ENCODE measurements at regions of chrX and their contacts with region 1.

Region 1: DNA sequence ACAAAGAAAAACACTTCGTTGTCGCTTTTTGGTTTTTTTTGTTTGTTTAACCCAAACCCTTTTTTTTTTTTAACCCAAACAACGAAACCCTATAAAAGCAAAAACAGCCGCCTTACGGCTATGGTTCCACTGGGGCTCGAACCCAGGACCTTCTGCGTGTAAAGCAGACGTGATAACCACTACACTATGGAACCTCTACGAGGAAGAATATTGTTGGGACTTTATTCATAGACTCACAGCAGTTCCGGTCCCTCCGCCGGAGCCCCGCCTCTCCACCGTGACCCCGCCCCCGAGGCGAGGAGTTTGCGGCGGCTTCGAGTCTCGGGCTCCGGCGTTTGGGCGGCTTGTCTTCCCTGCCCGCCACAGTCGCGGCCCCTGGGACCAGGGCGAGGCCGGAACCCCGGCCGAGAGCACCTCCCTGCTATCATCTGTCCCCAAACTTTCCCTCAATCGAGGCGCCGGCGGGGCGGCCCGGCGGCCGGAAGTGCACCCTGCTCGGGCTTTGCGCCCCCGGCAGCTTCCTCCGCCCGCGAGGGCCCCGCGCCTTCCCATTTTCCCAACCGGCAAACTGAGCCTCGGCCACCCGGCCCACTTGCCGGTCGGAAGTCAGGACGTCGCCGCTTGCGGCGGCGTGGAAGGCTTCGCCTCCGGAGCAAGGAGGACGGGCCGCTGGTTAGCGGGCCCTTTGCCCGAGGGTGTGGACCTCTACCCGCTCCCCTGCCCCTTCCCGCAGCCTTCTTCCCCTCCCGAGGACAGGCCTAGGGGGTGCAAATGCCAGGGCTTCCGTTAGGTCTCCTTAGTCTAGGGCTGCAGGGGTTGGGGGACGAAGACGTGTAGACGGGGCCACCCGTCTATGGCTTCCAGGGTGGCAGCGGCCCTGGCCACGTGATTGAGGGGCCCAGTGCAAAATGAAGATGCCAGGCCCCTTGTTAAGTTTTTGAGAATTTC is 3.2 kb upstream of the RS1 start:
- DNase-seq: peak; percentile 75
- H3K4me3 Mint-ChIP-seq: peak overlapping the region; percentile 74
- H3K27ac Mint-ChIP-seq: peak overlapping the region; percentile 52
- H3K4me1 Mint-ChIP-seq: no peaks in the 10 kb centered on the region
- H3K27me3 Mint-ChIP-seq: no peaks in the 10 kb centered on the region

Region 2: GRCh38 chrX:18574591-18574990 is 100.5 kb before region 1 on chrX:
- intact Hi-C with region 1: no loop called
- DNase-seq: no peak
- H3K4me3 Mint-ChIP-seq: no peak overlapping the region
- H3K27ac Mint-ChIP-seq: no peak overlapping the region
- H3K4me1 Mint-ChIP-seq: no peaks in the 10 kb centered on the region
- H3K27me3 Mint-ChIP-seq: no peaks in the 10 kb centered on the region

Region 3: GRCh38 chrX:18886344-18887161 is 211.5 kb after region 1 on chrX:
- intact Hi-C with region 1: loop called (anchors 1 kb)
- DNase-seq: peak; percentile 12
- H3K4me3 Mint-ChIP-seq: peak overlapping the region; percentile 85
- H3K27ac Mint-ChIP-seq: peak overlapping the region; percentile 85
- H3K4me1 Mint-ChIP-seq: peaks cover 19% of the 10 kb centered on the region
- H3K27me3 Mint-ChIP-seq: peaks cover 2% of the 10 kb centered on the region

Region 4: DNA sequence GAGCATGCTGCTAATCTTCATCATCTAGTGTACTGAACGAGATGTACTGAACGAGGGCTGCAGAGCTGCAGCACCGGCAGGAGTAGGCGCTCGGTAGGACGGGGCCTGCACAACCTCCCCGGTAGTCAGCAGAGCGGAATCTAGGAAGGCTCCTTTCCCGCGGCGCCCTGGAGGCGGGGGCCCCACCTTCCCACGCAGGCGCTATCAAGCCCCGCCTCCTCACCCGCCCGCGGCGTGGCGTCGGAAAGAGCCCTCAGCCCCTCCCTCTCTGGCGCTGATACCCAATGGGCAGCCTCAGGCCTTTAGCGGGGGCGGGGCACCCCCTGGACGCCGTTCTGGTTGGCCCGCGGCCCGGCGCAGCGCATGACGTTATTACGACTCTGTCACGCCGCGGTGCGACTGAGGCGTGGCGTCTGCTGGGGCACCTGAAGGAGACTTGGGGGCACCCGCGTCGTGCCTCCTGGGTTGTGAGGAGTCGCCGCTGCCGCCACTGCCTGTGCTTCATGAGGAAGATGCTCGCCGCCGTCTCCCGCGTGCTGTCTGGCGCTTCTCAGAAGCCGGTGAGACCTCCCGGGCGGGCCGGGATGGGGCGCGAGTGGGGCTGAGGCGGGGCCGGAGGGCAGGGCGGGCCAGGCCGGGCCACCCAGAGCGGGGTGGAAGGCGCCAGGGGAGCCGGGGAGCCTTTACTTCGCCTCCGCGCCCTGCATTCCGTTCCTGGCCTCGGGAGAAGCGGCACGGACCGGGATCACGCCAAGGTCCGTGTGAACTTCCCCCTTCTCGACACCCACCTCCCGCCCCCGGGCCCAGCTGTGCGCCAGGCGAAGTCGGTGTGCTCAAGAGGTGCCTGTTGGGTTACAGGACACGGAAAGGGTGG is 668.7 kb after region 1 on chrX and contains the start of gene PDHA1:
- intact Hi-C with region 1: loop called (anchors 5 kb)
- DNase-seq: peak; percentile 90
- H3K4me3 Mint-ChIP-seq: peak within 1 kb of the TSS; percentile 90
- H3K27ac Mint-ChIP-seq: peak within 1 kb of the TSS; percentile 90
- H3K4me1 Mint-ChIP-seq: peaks cover 13% of the 10 kb centered on the region
- H3K27me3 Mint-ChIP-seq: peaks cover 2% of the 10 kb centered on the region
- total RNA-seq, gene PDHA1: 213 and 218 TPM in 2 replicates

Region 5: DNA sequence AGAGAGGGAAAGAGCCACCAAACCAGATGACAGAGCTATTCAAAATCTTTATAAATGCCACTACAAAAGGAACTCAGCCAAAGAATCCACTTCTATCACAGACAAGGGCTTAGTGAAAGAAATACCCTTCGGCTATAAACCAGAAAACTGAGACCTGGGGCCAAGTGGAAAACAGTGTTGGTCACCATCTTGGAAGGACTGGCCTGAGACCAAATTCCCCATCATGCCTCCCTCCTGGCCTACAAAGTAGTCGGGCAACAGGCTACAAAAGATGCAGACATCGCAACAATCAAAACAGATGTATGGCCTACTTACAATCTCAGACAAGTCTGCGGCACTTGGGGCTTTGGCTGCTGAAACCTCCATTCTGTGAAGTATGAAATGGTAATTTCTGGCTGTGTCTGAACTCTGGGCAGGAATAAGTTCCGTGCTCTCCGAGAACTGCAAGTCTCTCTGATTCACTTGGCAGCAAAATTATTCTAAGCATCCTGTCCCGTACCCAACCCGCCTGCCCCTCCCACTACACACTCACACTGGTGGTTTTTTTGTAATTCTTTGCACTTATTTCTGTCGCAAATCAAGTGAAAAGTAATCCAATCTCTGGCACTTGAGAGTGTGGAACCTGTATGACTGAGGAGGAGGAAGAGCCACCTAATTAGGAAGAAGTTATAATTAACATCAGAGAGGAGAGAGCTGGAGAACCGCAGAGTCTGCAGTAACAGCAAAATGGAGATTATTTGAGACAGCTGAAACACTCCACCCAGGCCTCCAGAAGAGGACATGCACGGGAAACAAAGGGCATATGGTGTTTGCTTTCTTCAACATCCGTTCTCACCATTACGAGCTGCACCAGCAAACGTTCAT is 1124.5 kb after region 1 on chrX:
- intact Hi-C with region 1: no loop called
- DNase-seq: peak; percentile 27
- H3K4me3 Mint-ChIP-seq: peak overlapping the region; percentile 88
- H3K27ac Mint-ChIP-seq: peak overlapping the region; percentile 95
- H3K4me1 Mint-ChIP-seq: peaks cover 77% of the 10 kb centered on the region
- H3K27me3 Mint-ChIP-seq: no peaks in the 10 kb centered on the region

Measured in activated T-helper 1 cell treated with anti-CD3 and anti-CD28 coated beads, Interleukin-12 subunit alpha, Interleukin-12 subunit beta, Interleukin-2, Interleukin-4 antibody, amounts not matched to agents 30 ng/mL and 10 ng/mL and 1 ng/mL, durations not matched to agents 14 hours and 24 hours and 36 hours (primary cell).